K562 (cell line): ENCODE measurements at regions of chr3 and their contacts with region 1.

Region 1: GRCh38 chr3:196518966-196519717 is 4.0 kb upstream of the SMCO1 start:
- DNase-seq: peak; percentile 77 to 95 (median 80)
- ATAC-seq: peak; percentile 89
- H3K4me3 ChIP-seq: no peak overlapping the region
- H3K27ac ChIP-seq: peak overlapping the region; percentile 61; the same call in 2 of the 3 replicates
- H3K4me1 ChIP-seq: peaks cover 12 to 48% of the 10 kb centered on the region in 2 experiments
- H3K27me3 ChIP-seq: no peaks in the 10 kb centered on the region
- CTCF ChIP-seq: peak; percentile 78 to 96 (median 83)
- EP300 ChIP-seq: 0 out of 2 replicates have a peak, but pooled peaks have one; percentile 37
- POLR2A ChIP-seq: no peak
- RAD21 ChIP-seq: peak; percentile 96 to 97

Region 2: DNA sequence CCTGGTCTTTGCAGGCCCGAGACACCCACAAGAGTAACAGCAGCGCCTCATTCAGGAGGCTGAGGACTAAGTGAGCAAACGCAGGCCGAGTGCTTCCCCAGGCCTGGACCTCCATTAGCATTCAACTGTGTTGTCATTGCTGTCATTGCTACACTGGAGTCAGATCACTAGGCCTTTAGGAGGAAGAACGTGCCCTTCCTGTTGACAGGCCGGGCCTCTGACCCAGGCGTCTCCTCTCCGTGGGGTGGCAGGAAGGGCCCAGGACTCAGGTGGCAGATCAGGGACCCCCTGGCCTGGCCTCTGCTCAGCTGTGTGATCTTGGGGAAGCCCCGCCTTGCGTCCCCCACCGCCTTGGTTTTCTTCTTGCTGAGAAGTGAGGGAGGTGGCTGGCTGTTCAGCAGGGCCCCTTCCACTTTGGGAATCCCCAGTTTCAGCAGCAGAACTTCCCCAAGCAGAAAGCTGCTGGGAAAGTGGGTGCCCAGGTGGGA is 327.1 kb before region 1 on chr3:
- CTCF ChIA-PET with region 1: no interaction called
- POLR2A ChIA-PET with region 1: no interaction called
- in situ Hi-C with region 1: no loop called
- intact Hi-C with region 1: loop called (anchors 2 kb)
- DNase-seq: peak in 1 of 4 experiments; percentile 34
- ATAC-seq: no peak
- H3K4me3 ChIP-seq: no peak overlapping the region
- H3K27ac ChIP-seq: peak overlapping the region; percentile 62; the same call in 2 of the 3 replicates
- H3K4me1 ChIP-seq: peaks cover 46 to 83% of the 10 kb centered on the region in 2 experiments
- H3K27me3 ChIP-seq: no peaks in the 10 kb centered on the region
- CTCF ChIP-seq: no peak
- EP300 ChIP-seq: no peak
- POLR2A ChIP-seq: no peak
- RAD21 ChIP-seq: peak in 1 of 2 experiments; percentile 24; a peak in 1 of 4 replicates

Region 3: DNA sequence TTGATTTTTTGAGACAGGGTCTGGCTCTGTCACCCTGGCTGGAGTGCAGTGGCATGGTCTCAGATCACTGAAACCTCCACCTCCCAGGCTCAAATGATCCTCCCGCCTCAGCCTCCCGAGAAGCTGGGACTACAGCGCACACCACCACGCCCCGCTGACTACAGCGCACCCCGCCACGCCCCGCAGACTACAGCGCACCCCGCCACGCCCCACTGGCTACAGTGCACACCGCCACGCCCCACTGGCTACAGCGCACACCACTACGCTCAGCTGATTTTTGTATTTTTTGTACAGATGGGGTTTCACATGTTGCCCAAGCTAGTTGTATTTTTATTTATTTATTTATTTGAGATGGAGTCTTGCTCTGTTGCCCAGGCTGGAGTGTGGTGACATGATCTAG is 267.2 kb before region 1 on chr3:
- CTCF ChIA-PET with region 1: interaction called, 23 read pairs
- POLR2A ChIA-PET with region 1: no interaction called
- in situ Hi-C with region 1: loop called (anchors 5 kb)
- intact Hi-C with region 1: loop called (anchors 1 kb)
- DNase-seq: no peak
- ATAC-seq: no peak
- H3K4me3 ChIP-seq: no peak overlapping the region
- H3K27ac ChIP-seq: no peak overlapping the region
- H3K4me1 ChIP-seq: no peaks in the 10 kb centered on the region
- H3K27me3 ChIP-seq: no peaks in the 10 kb centered on the region
- CTCF ChIP-seq: no peak
- EP300 ChIP-seq: no peak
- POLR2A ChIP-seq: no peak
- RAD21 ChIP-seq: no peak

Region 4: GRCh38 chr3:196486263-196486662 is 32.9 kb before region 1 on chr3:
- CTCF ChIA-PET with region 1: interaction called, 17 read pairs
- POLR2A ChIA-PET with region 1: interaction called, 5 read pairs
- in situ Hi-C with region 1: no loop called
- intact Hi-C with region 1: loop called (anchors 1 kb)
- DNase-seq: peak in 1 of 4 experiments; percentile 52
- ATAC-seq: peak; percentile 86
- H3K4me3 ChIP-seq: no peak overlapping the region
- H3K27ac ChIP-seq: no peak overlapping the region
- H3K4me1 ChIP-seq: no peaks in the 10 kb centered on the region
- H3K27me3 ChIP-seq: no peaks in the 10 kb centered on the region
- CTCF ChIP-seq: peak; percentile 54 to 62 (median 59); a peak in 5 of 6 replicates
- EP300 ChIP-seq: no peak
- POLR2A ChIP-seq: no peak
- RAD21 ChIP-seq: peak; percentile 38 to 58